GM10248 (cell line): ENCODE measurements at regions of chr17 and their contacts with region 1.

Region 1: GRCh38 chr17:82051776-82052637 is at the starts of genes GPS1 and RFNG:
- DNase-seq: peak; percentile 94
- CTCF ChIP-seq: no peak

Region 2: DNA sequence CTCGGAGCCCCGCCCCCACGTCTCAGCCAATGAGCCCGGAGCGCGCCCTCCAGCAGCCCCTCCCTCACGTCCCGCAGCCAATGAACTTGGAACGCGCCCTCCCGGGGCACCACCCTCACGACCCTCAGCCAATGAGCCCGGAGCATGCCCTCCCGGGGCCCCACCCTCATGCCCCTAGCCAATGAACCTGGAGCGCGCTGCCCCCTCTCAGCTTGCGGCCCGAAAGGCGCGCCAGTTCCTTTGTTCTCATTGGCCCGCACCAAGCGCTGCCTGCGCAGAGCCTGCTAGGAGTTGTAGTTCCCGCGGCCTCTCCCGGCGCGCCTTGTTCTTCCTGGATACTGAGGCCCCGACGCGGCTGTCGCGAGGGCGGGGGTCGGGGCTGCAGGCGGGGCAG is 29.0 kb before region 1 on chr17 and contains the start of gene LRRC45:
- CTCF ChIA-PET with region 1: no interaction called
- POLR2A ChIA-PET with region 1: no interaction called
- DNase-seq: peak; percentile 99
- CTCF ChIP-seq: no peak

Region 3: DNA sequence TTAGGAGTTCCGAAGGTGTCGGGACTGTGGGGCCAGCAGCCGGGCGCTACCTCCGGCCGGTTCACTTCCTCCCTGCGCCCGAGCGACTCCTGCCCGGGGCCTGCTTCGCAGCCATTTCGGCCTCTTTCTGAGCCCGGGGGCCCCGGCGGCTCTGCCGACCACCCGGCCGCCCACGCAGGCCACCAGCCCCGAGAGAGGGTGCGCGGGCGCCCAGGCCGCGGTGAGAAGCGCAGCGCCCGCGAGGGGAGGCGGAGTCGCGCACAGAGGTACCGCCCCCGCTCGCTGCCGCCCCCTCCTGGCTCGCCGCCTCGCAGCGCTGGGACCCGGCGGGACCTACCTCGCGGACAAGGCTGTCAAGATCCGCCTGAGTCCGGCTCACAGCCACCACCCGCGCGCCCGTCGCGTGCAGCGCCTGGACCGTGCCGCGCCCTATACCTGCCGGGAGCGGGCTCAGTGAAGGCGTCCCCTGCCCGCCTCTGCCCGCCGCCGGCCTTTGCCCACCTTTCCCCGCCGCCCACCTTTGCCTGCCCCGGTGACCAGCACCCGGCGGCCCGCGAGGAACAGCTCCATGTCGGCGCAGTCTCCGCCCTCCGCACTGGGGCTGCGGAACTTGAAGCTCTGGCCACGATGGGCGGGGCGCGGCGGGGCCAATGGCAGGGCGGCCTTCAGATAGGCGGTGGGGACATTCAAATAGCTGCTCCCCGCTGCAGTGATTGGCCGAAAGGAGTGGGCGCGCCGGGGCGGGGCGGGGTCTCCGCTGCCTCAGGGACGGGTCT is 14.7 kb before region 1 on chr17 and contains the start of gene DCXR:
- CTCF ChIA-PET with region 1: interaction called, 15 read pairs
- POLR2A ChIA-PET with region 1: interaction called, 5 read pairs
- DNase-seq: peak; percentile 98
- CTCF ChIP-seq: peak; percentile 93

Region 4: GRCh38 chr17:82283208-82283749 is 231.3 kb after region 1 on chr17:
- CTCF ChIA-PET with region 1: no interaction called
- POLR2A ChIA-PET with region 1: no interaction called
- DNase-seq: no peak
- CTCF ChIP-seq: no peak